Activated CD4-positive, alpha-beta memory T cell treated with anti-CD3 and anti-CD28 coated beads, Interleukin-2, amount 10 ng/mL, durations not matched to agents 7 days and 5 days (primary cell): ENCODE measurements at regions of chr3 and their contacts with region 1.

Region 1: DNA sequence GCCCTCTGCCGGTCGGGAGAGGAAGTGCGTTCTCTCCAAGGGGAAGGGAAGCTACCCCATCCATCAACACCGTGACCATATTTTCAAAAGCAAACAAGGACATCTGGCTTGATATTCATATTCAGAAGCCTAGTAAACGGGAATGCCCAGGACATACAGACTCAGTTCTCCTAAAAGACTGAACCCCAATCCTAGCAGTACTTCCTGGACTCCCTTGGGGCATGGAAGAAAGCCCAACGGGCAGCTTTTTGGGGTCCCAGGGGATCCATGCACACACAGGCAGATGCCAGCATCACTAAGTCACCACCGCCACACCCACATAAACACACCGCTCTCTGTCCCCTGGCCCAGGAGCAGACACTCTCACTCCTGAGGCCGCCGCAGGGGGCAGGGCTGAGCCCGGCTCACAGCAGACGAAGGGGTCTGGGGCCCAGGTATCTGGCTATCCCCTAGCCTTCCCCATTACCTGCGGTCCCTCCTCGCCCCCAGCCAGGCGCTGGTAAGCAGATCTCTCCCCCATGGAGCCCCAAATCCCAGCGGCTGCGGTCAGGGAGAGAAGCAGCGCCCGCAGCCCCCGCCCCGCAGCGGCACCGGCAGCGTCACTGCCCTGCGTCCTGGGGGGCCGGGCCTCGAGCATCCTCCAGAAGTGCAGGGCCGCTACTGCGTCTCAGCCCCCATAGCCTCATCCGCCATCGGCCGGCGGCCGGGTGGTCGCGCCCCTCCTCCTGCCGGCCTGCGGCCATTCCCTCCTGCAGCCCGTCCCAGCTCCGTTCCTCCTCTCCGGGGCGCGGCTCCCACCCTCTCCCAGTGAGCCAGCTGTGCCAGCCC is 13.4 kb downstream of the TNK2 start:
- DNase-seq: peak; percentile 73
- H3K4me3 Mint-ChIP-seq: peak overlapping the region; percentile 88
- H3K27ac Mint-ChIP-seq: peak overlapping the region; percentile 90
- H3K4me1 Mint-ChIP-seq: peaks cover 43% of the 10 kb centered on the region
- H3K27me3 Mint-ChIP-seq: no peaks in the 10 kb centered on the region

Region 2: GRCh38 chr3:195863121-195864006 is 31.6 kb before region 1 on chr3:
- CTCF ChIA-PET with region 1: interaction called, 61 read pairs
- POLR2A ChIA-PET with region 1: interaction called, 21 read pairs
- DNase-seq: peak; percentile 65
- H3K4me3 Mint-ChIP-seq: no peak overlapping the region
- H3K27ac Mint-ChIP-seq: no peak overlapping the region
- H3K4me1 Mint-ChIP-seq: peaks cover 6% of the 10 kb centered on the region
- H3K27me3 Mint-ChIP-seq: peaks cover 5% of the 10 kb centered on the region

Region 3: DNA sequence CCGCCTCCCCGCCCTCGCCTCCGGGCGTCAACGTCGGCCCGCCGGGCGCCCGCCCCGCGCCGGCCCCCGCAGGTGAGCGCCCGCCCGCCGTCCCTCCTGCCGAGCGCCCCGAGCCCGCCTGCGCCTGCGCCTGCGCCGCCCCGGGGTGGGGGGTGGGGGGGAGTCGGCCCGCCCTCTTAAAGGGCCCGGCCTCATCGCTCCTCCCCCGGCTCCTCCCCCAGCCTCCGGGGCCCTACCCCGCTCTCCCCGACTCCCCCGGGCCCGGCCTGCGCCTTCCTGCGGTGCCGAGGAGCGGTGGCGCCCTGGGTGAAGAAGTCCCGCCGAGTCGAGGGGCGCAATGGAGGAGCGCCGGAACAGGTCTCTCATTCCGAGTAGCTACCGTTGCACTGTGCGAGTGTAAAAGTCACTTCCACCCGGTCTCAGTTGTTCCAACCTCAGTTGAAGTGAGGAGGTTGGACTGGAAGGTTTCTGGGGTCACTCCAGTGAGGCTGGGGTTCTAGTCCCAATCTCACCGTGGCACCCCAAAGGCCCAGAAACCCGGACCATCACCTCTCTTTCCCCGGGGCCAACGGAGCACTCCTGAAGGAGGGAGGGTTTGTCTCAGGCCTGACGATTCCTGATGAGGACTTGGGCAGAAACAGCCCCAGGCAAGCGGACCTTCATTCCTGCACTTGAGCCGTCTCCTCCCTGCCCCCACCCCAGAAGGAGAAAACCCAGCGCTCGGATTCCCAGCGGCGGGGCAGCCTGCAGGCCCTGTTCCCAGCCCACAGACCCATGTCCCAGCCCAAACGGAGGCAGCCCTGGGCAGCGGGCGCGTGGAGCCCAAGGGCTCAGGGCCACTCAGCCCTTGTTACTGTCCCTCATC is 14.9 kb after region 1 on chr3:
- CTCF ChIA-PET with region 1: interaction called, 124 read pairs
- POLR2A ChIA-PET with region 1: interaction called, 180 read pairs
- DNase-seq: peak; percentile 89
- H3K4me3 Mint-ChIP-seq: peak overlapping the region; percentile 68
- H3K27ac Mint-ChIP-seq: peak overlapping the region; percentile 80
- H3K4me1 Mint-ChIP-seq: peaks cover 30% of the 10 kb centered on the region
- H3K27me3 Mint-ChIP-seq: no peaks in the 10 kb centered on the region